GM18951 (cell line): ENCODE measurements at regions of chr1 and their contacts with region 1.

Region 1: DNA sequence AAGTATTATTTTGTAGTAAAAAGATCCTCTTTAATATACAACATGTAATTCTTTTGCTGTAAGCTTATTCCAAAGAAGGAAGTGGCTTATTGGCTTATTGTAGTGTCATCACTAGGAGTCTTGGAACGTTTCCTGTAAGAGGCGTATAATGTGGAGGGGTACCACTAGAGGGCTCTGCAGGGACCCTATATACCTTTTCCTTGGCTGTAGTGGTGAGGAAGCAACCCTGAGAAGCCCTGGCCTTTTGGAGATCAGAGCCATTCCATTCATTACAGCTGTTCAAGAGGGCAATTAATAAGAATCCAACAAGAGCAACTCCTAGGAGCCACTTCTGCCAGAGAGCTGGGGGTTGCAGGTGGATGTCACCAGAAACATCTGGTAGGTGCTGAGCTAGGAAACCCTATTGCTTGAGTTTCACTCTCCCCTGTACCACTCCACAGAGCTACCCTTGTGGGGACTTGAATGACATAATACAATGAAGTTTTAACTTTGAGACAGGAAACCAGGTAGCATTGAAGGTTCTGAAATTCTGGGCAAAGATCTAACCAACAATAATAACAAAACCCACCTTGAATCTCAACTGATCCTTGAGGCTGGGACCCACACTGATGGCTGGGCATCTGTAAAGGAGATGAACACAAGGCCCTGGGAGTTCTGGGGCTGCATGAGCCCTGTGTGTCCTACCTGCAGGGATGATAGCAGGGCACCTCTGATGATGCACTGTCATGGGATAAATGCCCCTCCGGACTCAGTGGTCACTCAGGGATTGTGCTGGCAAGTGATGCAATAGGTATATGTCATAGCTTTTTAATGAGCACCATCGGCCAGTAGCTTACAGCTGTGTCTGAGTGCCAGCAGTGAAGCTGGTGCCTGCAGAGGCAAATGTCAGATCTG is 160.2 kb upstream of the COA6 start:
- POLR2A ChIP-seq: no peak

Region 2: GRCh38 chr1:234292011-234292410 is 79.0 kb after region 1 on chr1:
- in situ Hi-C with region 1: loop called (anchors 10 kb)
- POLR2A ChIP-seq: no peak